ENCODE measurements at regions of chr3 and their contacts with region 1.

Region 1: GRCh38 chr3:56347219-56347871 is 120.9 kb downstream of the ERC2 start:
- DNase-seq: peak; percentile 44 to 81 (median 57)
- ATAC-seq: peak; percentile 84 to 92 (median 85)
- H3K4me3 ChIP-seq: no peak overlapping the region
- H3K27ac ChIP-seq: no peak overlapping the region
- H3K4me1 ChIP-seq: no peaks in the 10 kb centered on the region
- H3K27me3 ChIP-seq: no peaks in the 10 kb centered on the region
- CTCF ChIP-seq: peak; percentile 43 to 75 (median 55)
- POLR2A ChIP-seq: no peak

Region 2: GRCh38 chr3:56076746-56077145 is 270.6 kb before region 1 on chr3:
- intact Hi-C with region 1: no loop called
- DNase-seq: no peak
- ATAC-seq: peak in 1 of 4 donors; percentile 47
- H3K4me3 ChIP-seq: no peak overlapping the region
- H3K27ac ChIP-seq: no peak overlapping the region
- H3K4me1 ChIP-seq: no peaks in the 10 kb centered on the region
- H3K27me3 ChIP-seq: no peaks in the 10 kb centered on the region
- CTCF ChIP-seq: no peak
- POLR2A ChIP-seq: no peak

Region 3: DNA sequence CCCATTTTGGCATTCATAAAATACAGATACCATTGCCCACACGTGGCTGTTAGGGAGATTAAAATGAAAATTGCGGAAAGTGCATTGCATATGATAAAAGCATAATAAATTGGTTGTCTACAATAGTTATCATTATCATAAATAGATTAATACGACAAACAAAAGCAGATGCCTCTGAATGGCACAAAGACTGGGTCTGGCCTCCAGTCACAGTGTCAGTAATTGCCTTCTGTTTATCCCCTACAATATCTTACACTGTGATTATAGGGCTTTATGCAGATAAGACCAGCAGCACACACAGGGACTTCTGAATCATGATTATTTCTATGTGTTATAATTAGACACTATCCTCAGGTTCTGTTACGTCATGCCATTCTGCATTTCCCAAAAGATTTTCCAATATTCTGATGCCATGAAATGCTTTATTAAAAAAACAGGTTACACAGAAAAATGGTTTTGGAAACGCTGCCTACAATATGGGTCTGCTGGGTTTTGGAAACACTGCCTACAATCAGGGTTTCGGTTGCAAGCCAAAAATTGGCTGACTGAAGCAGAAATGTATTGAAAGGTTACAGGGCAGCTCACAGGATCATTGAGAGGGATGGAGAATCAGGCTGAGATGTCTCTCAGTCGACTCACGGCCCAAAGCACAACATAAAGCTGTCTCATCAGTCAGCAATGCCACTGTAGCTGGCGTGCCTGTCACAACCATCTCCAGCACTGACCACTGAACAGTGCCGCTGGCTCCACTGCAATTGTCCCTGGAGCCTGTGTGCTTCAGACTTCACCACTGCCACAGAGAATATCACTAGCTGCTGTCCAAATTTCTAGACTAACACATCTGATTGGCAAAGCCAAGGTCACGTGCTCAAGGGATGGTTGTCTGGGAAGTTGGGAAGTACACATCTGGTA is 127.2 kb before region 1 on chr3:
- intact Hi-C with region 1: no loop called
- DNase-seq: no peak
- ATAC-seq: no peak
- H3K4me3 ChIP-seq: no peak overlapping the region
- H3K27ac ChIP-seq: no peak overlapping the region
- H3K4me1 ChIP-seq: no peaks in the 10 kb centered on the region
- H3K27me3 ChIP-seq: no peaks in the 10 kb centered on the region
- CTCF ChIP-seq: no peak
- POLR2A ChIP-seq: no peak

Region 4: DNA sequence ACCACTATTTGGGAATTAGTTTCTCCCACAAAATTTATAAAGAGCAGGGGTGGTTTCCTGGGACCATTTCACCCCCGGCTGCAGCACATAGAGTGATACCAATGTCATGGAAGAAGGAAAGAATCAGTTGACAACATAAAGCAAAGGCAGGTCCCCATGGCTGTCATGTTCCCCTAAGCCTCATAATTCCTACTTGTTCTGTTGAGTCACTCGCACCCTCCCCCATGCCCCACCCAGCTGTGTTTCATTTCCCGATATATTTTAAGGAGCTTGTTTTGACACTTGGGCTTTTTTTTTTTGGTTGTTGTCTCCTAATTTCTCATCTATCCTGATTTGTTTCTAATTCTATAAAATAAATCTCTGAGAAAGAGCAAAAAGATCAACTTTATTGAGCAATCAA is 96.0 kb after region 1 on chr3:
- intact Hi-C with region 1: loop called (anchors 5 to 10 kb)
- DNase-seq: no peak
- ATAC-seq: no peak
- H3K4me3 ChIP-seq: no peak overlapping the region
- H3K27ac ChIP-seq: no peak overlapping the region
- H3K4me1 ChIP-seq: no peaks in the 10 kb centered on the region
- H3K27me3 ChIP-seq: no peaks in the 10 kb centered on the region
- CTCF ChIP-seq: no peak
- POLR2A ChIP-seq: no peak

Region 5: GRCh38 chr3:56453011-56453410 is 105.7 kb after region 1 on chr3:
- intact Hi-C with region 1: loop called (anchors 5 to 10 kb)
- DNase-seq: no peak
- ATAC-seq: no peak
- H3K4me3 ChIP-seq: no peak overlapping the region
- H3K27ac ChIP-seq: no peak overlapping the region
- H3K4me1 ChIP-seq: no peaks in the 10 kb centered on the region
- H3K27me3 ChIP-seq: no peaks in the 10 kb centered on the region
- CTCF ChIP-seq: no peak
- POLR2A ChIP-seq: no peak